ENCODE measurements at regions of chr6 and their contacts with region 1.

Region 1: GRCh38 chr6:151702851-151703611 is 104.5 kb upstream of the ESR1 start:
- DNase-seq: no peak
- H3K4me3 Mint-ChIP-seq: no peak overlapping the region
- H3K27ac Mint-ChIP-seq: peak overlapping the region; percentile 72
- H3K4me1 Mint-ChIP-seq: peaks cover 27% of the 10 kb centered on the region
- H3K27me3 Mint-ChIP-seq: peaks cover 24% of the 10 kb centered on the region

Region 2: DNA sequence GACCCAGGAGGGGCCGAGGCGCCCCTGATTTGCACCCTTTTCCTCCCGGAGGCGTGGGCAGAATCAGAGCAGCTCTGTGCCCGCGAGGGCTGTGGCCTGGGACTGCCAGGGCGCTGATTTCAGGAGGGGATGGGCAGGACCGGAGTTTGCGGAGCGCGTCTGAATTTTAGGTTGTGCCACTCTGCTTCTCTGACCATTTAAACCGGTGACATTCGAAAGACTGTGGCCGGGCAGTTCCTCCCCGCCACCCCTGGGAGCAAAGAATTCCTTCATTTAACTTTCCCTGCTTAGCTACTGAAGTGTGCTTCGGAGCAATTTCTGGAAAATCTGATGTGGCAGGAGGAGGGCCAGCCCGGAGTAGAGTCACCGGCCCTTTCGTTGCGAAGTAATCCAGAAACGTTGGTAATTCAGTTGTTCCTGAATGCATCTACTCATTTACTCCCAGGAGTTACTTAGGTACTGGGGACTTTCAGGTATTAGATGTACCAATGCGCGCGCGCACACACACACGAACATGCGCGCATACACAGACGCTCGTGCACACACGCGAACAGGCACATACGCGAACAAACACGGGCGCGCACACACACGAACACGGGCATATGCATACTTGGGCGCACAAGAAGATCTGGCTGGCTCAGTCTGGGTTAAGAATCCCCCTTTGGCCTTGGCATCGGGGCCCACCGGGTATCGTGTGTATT is 208.6 kb before region 1 on chr6:
- intact Hi-C with region 1: loop called (anchors 10 kb)
- DNase-seq: peak; percentile 76
- H3K4me3 Mint-ChIP-seq: peak overlapping the region; percentile 82
- H3K27ac Mint-ChIP-seq: no peak overlapping the region
- H3K4me1 Mint-ChIP-seq: peaks cover 15% of the 10 kb centered on the region
- H3K27me3 Mint-ChIP-seq: peaks cover 49% of the 10 kb centered on the region

Region 3: GRCh38 chr6:151608435-151608834 is 94.6 kb before region 1 on chr6:
- intact Hi-C with region 1: no loop called
- DNase-seq: no peak
- H3K4me3 Mint-ChIP-seq: no peak overlapping the region
- H3K27ac Mint-ChIP-seq: no peak overlapping the region
- H3K4me1 Mint-ChIP-seq: no peaks in the 10 kb centered on the region
- H3K27me3 Mint-ChIP-seq: peaks cover 7% of the 10 kb centered on the region

Region 4: GRCh38 chr6:151723152-151723551 is 20.1 kb after region 1 on chr6:
- intact Hi-C with region 1: loop called (anchors 1 kb)
- DNase-seq: peak; percentile 79
- H3K4me3 Mint-ChIP-seq: peak overlapping the region; percentile 29
- H3K27ac Mint-ChIP-seq: peak overlapping the region; percentile 64
- H3K4me1 Mint-ChIP-seq: peaks cover 26% of the 10 kb centered on the region
- H3K27me3 Mint-ChIP-seq: peaks cover 11% of the 10 kb centered on the region

Region 5: GRCh38 chr6:151757506-151758245 is 54.6 kb after region 1 on chr6:
- intact Hi-C with region 1: loop called (anchors 1 kb)
- DNase-seq: peak; percentile 84
- H3K4me3 Mint-ChIP-seq: peak overlapping the region; percentile 67
- H3K27ac Mint-ChIP-seq: peak overlapping the region; percentile 94
- H3K4me1 Mint-ChIP-seq: peaks cover 36% of the 10 kb centered on the region
- H3K27me3 Mint-ChIP-seq: no peaks in the 10 kb centered on the region

Region 6: DNA sequence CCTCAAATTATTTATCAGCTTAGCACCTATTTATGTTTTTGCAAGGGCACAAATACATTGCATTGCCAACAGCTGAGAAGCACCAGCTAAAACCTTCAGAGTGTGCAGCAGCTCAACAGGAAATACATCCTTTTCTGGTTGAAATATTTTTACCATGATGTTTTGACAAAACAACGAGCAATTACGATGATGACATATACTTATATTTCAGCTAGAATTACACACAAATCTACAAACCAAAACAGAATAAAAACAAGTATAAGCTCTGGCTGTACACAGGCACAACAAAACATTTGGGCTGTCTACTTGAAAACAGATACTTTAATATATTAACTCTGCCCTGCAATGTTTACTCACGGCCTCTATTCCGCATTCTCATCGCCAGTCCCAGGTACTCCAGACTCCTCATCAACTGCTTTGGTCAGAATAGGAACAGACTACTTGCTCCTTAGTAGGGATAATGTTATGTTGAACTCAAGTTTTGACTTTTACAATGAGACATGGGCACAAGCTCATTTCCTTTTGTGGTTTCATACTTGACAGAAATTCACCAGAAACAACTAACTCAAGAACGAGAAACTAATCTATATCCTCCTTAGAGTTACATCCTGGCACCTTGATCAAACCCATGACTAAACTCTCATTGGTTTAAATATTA is 482.0 kb after region 1 on chr6:
- intact Hi-C with region 1: loop called (anchors 5 kb)
- DNase-seq: peak; percentile 74
- H3K4me3 Mint-ChIP-seq: peak overlapping the region; percentile 86
- H3K27ac Mint-ChIP-seq: peak overlapping the region; percentile 96
- H3K4me1 Mint-ChIP-seq: peaks cover 53% of the 10 kb centered on the region
- H3K27me3 Mint-ChIP-seq: no peaks in the 10 kb centered on the region